WTC11 (cell line): ENCODE measurements at regions of chr19 and their contacts with region 1.

Region 1: DNA sequence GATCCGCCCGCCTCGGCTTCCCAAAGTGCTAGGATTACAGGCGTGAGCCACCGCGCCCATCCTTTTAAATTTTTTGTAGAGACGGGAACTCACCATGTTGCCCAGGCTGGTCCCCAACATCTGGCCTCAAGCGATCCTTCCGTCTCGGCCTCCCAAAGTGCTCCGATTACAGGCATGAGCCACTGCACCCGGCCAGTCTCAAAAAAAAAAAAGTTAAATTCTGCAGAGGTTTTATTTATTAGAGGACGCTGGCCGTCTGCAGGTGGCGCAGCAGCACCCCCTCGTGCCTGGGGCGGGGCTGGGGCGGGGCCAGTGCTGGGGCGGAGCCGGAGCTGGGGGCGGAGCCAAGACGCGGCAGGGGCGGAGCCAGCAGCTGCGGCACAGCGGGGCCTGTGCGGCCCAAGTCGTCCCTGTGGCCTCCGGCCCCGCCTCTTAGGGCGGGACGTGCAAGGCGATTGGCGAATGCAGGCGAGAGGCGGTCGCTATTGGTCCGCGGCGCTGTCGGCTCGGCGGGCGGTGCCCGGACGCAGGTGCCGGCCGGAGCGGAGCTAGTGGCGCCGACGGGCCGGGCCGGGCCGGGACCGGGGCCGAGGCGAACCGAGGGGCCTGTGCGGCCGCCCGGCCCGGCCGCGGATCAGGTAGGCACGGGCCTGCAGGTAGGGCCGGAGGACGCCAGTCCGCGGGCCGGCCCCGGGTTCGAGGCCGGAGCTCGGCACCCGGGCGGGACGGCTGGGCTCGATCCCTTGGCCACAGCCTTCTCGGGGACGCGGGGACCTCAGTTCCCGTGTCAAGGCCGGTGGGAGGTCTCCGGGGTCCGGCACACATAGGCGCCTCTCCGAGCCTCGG is at the start of gene MARCHF2:
- DNase-seq: peak; percentile 96
- ATAC-seq: peak; percentile 99
- H3K4me3 Mint-ChIP-seq: peak within 1 kb of the TSS; percentile 59
- H3K27ac Mint-ChIP-seq: no peak within 1 kb of the TSS
- H3K4me1 Mint-ChIP-seq: peaks cover 4% of the 10 kb centered on the region
- H3K27me3 Mint-ChIP-seq: peaks cover 2% of the 10 kb centered on the region; the same call in 1 of the 2 replicates
- CTCF ChIP-seq: no peak; the same call in 1 of the 2 replicates
- total RNA-seq, gene MARCHF2: 20.2 to 30.4 TPM (median 27.5 TPM) in 3 replicates

Region 2: DNA sequence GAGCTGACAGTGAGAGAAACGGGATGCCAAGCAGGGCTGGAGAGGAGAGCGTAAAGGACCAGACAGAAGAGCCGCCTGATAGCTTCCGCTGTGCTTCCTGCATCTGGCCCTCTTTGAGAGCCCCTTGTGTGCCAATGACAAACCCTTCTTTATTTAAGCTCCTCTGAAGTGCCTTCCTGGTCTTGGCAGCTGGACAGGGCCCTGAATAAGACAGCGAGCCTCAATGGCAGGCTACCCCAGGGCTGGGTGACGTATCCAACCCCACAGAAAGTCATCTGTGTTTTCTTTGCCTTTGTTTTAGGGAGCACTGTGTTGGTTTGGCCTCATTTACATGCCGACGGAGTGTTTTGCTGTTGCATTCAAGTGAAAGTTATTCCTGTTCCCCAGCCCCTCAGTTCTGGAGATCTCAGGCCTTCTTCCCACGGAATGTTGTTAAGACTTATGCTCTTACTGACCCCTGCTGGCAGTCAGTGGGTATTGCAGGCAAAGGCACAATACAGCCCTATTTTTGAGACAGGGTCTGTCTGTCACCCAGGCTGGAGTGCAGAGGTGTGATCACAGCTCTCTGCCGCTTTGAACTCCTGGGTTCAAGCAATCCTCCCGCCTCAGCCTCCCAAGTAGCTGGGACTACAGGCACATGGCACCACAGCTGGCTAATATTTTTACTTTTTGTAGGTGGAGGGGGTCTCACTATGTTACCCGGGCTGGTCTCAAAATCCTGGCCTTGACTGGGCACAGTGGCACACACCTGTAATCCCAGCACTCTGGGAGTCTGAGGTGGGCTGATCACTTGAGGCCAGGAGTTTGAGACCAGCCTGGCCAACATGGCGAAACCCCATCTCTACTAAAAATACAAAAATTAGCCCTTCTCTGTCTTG is 343.7 kb before region 1 on chr19:
- CTCF ChIA-PET with region 1: no interaction called
- POLR2A ChIA-PET with region 1: no interaction called
- DNase-seq: peak; percentile 73
- ATAC-seq: peak; percentile 51
- H3K4me3 Mint-ChIP-seq: no peak overlapping the region
- H3K27ac Mint-ChIP-seq: no peak overlapping the region
- H3K4me1 Mint-ChIP-seq: no peaks in the 10 kb centered on the region
- H3K27me3 Mint-ChIP-seq: no peaks in the 10 kb centered on the region; the same call in 1 of the 2 replicates
- CTCF ChIP-seq: peak; percentile 94

Region 3: GRCh38 chr19:8081569-8082550 is 331.1 kb before region 1 on chr19:
- CTCF ChIA-PET with region 1: no interaction called
- POLR2A ChIA-PET with region 1: no interaction called
- DNase-seq: no peak
- ATAC-seq: no peak
- H3K4me3 Mint-ChIP-seq: no peak overlapping the region
- H3K27ac Mint-ChIP-seq: peak overlapping the region; percentile 14; the same call in 1 of the 2 replicates
- H3K4me1 Mint-ChIP-seq: peaks cover 4% of the 10 kb centered on the region; the same call in 1 of the 2 replicates
- H3K27me3 Mint-ChIP-seq: no peaks in the 10 kb centered on the region
- CTCF ChIP-seq: no peak

Region 4: DNA sequence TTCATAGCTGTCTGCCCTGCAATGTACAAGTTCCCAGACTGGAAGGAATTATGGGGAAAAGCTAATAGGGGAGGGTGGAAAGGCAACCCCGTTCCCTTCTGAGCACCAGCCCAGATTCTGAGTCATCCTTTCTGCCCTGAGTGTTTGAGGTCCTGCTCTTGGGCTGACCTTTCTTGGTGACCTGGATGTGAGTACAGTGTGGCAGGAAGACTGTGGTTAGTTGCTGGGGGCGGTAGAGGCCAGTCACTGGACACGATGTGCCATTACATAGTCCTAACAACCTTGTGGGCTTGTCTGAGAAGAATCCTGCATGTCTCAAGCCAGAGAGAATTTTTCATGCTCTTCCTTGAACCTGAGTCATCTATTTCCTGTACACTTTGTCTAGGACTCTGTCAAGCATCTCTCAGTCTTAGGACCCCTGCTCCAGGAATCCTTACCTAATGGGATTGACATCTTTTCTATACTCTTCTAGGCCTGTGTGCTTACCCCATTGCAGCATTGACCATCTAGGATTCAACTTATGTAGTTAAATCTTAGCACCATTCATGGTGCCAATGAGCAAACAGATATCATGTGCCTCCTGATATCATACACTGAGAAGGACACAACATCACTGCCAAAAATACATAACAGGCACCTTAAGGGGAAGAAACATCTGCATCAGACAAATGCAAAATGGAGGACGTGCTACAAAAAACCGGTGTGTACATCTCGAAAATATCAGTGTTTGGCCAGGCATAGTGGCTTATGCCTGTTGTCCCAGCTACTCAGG is 57.2 kb before region 1 on chr19:
- CTCF ChIA-PET with region 1: interaction called, 46 read pairs
- POLR2A ChIA-PET with region 1: interaction called, 4 read pairs
- DNase-seq: no peak
- ATAC-seq: no peak
- H3K4me3 Mint-ChIP-seq: no peak overlapping the region
- H3K27ac Mint-ChIP-seq: no peak overlapping the region
- H3K4me1 Mint-ChIP-seq: peaks cover 14% of the 10 kb centered on the region
- H3K27me3 Mint-ChIP-seq: peaks cover 16% of the 10 kb centered on the region
- CTCF ChIP-seq: no peak

Region 5: GRCh38 chr19:8389891-8390616 is 23.0 kb before region 1 on chr19 and contains the start of gene RAB11B:
- CTCF ChIA-PET with region 1: interaction called, 39 read pairs
- POLR2A ChIA-PET with region 1: no interaction called
- DNase-seq: peak; percentile 99
- ATAC-seq: peak; percentile 95
- H3K4me3 Mint-ChIP-seq: peak within 1 kb of the TSS; percentile 89
- H3K27ac Mint-ChIP-seq: peak within 1 kb of the TSS; percentile 97
- H3K4me1 Mint-ChIP-seq: peaks cover 16% of the 10 kb centered on the region
- H3K27me3 Mint-ChIP-seq: no peaks in the 10 kb centered on the region
- CTCF ChIP-seq: no peak
- total RNA-seq, gene RAB11B: 108 to 127 TPM (median 120 TPM) in 3 replicates

Region 6: DNA sequence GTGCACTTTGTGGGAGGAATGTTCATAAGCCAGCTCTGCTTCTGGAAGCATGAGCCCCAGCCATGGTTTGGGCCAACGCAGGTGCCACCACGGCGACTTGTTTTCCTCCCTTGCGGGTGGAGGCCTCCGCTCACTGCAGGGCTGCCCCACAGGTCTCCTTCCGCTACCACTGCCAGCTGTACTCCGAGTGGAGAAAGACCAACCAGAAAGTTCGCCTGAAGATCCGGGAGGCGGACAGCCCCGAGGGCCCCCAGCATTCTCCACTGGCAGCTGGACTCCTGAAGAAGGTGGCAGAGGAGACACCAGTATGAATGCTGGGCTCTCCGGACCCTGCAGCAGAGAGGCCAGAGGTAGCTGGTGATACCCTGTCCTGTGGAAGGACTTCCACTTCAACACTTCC is 25.2 kb after region 1 on chr19:
- CTCF ChIA-PET with region 1: interaction called, 16 read pairs
- POLR2A ChIA-PET with region 1: no interaction called
- DNase-seq: no peak
- ATAC-seq: no peak
- H3K4me3 Mint-ChIP-seq: no peak overlapping the region
- H3K27ac Mint-ChIP-seq: peak overlapping the region; percentile 44; the same call in 1 of the 2 replicates
- H3K4me1 Mint-ChIP-seq: peaks cover 11% of the 10 kb centered on the region
- H3K27me3 Mint-ChIP-seq: no peaks in the 10 kb centered on the region
- CTCF ChIP-seq: no peak

Region 7: DNA sequence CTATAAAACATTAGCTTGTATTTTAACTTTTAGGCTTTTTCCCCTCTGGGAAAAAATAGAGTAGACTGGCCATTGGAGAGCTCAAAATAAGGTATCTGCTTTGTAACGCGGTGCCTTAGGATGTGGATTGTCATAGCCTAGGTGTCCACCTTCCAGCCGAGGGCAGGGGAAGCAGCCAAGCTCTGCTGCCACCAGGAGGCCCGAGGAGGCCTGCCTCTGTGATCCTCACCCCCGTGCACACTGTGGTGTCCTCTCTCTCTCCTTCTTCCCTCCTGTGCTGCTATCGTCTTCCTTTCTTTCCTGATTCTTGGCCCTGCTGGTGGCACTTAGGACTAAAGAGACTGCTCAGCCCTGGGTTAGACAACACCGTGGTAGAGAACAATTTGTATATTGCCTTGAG is 43.1 kb after region 1 on chr19:
- CTCF ChIA-PET with region 1: interaction called, 17 read pairs
- POLR2A ChIA-PET with region 1: interaction called, 3 read pairs
- DNase-seq: peak; percentile 46
- ATAC-seq: peak; percentile 85
- H3K4me3 Mint-ChIP-seq: no peak overlapping the region
- H3K27ac Mint-ChIP-seq: peak overlapping the region; percentile 73
- H3K4me1 Mint-ChIP-seq: peaks cover 99% of the 10 kb centered on the region
- H3K27me3 Mint-ChIP-seq: no peaks in the 10 kb centered on the region
- CTCF ChIP-seq: no peak

Region 8: GRCh38 chr19:8513687-8514504 is 100.9 kb after region 1 on chr19 and contains the start of gene ZNF414:
- CTCF ChIA-PET with region 1: interaction called, 19 read pairs
- POLR2A ChIA-PET with region 1: no interaction called
- DNase-seq: peak; percentile 100
- ATAC-seq: peak; percentile 87
- H3K4me3 Mint-ChIP-seq: peak within 1 kb of the TSS; percentile 86
- H3K27ac Mint-ChIP-seq: peak within 1 kb of the TSS; percentile 100
- H3K4me1 Mint-ChIP-seq: peaks cover 16% of the 10 kb centered on the region
- H3K27me3 Mint-ChIP-seq: peaks cover 6% of the 10 kb centered on the region; the same call in 1 of the 2 replicates
- CTCF ChIP-seq: no peak
- total RNA-seq, gene ZNF414: 38.2 to 47.4 TPM (median 46.1 TPM) in 3 replicates

Region 9: DNA sequence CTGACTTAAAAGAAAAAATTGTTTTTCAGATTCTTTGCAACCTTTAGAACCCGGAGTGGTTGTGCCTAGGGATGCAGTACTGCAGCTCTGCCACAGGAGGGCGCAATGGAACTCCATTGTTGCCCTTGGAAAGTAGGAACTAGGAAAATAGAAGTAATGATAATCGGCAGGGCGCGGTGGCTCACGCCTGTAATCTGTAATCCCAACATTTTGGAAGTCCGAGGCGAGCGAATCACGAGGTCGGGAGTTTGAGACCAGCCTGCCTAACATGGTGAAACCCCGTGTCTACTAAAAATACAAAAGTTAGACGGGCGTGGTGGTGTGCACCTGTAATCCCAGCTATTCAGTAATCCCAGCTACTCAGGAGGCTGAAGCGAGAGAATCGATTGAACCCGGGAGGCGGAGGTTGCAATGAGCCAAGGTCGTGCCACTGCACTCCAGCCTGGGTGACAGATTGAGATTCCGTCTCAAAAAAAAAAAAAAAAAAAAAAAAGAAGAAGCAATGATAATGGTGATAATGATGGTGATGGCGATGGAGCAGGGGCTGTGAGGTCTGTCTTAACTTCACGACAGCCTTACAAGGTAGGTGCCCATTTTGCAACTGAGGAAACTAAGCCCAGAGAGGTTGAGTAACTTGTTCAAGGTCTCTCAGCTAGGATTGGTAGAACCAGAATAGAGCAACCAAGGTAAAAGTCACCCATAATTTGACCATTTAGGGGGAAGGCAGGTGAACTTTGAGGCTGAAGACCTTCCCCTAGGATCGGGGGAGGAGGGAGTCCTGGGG is 203.0 kb after region 1 on chr19:
- CTCF ChIA-PET with region 1: no interaction called
- POLR2A ChIA-PET with region 1: no interaction called
- DNase-seq: peak; percentile 77
- ATAC-seq: peak; percentile 12; the same call in 1 of the 2 replicates
- H3K4me3 Mint-ChIP-seq: no peak overlapping the region
- H3K27ac Mint-ChIP-seq: no peak overlapping the region
- H3K4me1 Mint-ChIP-seq: peaks cover 14% of the 10 kb centered on the region
- H3K27me3 Mint-ChIP-seq: no peaks in the 10 kb centered on the region
- CTCF ChIP-seq: peak; percentile 96